Activated CD8-positive, alpha-beta memory T cell treated with anti-CD3 and anti-CD28 coated beads, Interleukin-2, amount 10 ng/mL, durations not matched to agents 7 days and 5 days (primary cell): ENCODE measurements at regions of chr7 and their contacts with region 1.

Region 1: DNA sequence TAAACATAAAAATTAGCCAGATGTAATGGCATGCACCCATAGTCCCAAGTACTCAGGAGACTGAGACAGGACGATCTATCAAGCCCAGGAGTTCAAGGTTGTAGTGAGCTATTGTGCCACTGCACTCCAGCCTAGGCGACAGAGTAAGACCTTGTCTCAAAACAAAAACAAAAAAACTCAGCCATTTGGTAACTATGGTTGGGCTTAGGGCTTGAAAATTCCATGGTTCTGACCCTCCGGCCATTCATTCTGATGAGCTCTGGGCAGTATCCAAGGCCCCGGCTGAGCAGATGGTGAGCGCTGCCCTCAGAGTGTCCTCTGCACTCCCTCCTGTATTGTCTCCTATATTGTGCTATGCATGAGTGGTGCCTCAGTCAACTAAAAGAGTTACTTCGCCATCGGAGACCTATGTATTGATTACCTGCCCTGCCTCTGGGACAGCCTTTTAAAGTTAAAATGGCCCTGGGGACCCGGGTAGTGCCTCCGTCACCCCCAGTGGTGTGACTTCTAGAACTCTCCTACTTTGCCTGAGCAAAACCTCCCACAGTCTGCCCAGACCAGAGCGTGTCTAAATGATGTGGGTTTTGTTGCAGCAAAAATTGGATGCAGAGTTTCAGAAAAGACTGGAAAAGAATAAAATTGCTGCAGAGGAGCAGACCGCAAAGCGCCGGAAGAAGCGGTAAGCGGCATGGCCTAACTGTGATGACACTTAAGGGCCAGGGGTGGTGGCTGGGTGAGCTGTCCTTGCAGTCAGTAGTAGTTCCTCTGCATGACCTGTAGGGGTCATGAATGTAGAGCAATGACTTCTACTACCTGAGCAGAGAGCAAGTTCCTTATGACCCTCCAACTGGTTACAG is 8.1 kb downstream of the PRKRIP1 start:
- DNase-seq: peak; percentile 70
- ATAC-seq: peak; percentile 99
- H3K4me3 Mint-ChIP-seq: no peak overlapping the region
- H3K27ac Mint-ChIP-seq: peak overlapping the region; percentile 35
- H3K4me1 Mint-ChIP-seq: peaks cover 26% of the 10 kb centered on the region
- H3K27me3 Mint-ChIP-seq: no peaks in the 10 kb centered on the region

Region 2: GRCh38 chr7:102012996-102013461 is 391.2 kb before region 1 on chr7:
- CTCF ChIA-PET with region 1: no interaction called
- DNase-seq: no peak
- ATAC-seq: no peak
- H3K4me3 Mint-ChIP-seq: no peak overlapping the region
- H3K27ac Mint-ChIP-seq: no peak overlapping the region
- H3K4me1 Mint-ChIP-seq: no peaks in the 10 kb centered on the region
- H3K27me3 Mint-ChIP-seq: no peaks in the 10 kb centered on the region

Region 3: DNA sequence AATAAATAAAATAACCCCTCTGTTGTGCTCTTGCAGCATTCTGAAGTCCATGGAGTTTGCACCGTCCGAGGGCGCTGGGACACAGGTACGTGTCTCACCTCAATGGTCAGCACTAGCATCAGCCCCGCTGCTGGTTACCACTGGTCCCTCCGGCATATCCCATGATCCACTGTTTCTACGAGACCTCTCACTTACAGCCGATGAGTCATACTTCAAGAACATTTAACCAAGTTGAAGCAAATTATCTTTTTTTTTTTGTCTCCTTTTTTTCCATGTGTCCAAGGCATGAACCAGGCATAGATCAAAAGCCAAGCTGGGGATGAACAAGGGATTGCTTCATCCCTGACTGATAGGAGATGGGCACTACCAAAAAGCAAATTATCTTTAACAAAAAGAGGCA is 210.4 kb before region 1 on chr7:
- CTCF ChIA-PET with region 1: no interaction called
- DNase-seq: no peak
- ATAC-seq: no peak
- H3K4me3 Mint-ChIP-seq: no peak overlapping the region
- H3K27ac Mint-ChIP-seq: no peak overlapping the region
- H3K4me1 Mint-ChIP-seq: no peaks in the 10 kb centered on the region
- H3K27me3 Mint-ChIP-seq: no peaks in the 10 kb centered on the region

Region 4: GRCh38 chr7:102433219-102434038 is 29.2 kb after region 1 on chr7 and contains the start of gene ORAI2:
- CTCF ChIA-PET with region 1: interaction called, 31 read pairs
- DNase-seq: peak; percentile 89
- ATAC-seq: peak; percentile 71
- H3K4me3 Mint-ChIP-seq: peak within 1 kb of the TSS; percentile 75
- H3K27ac Mint-ChIP-seq: peak within 1 kb of the TSS; percentile 85
- H3K4me1 Mint-ChIP-seq: peaks cover 53% of the 10 kb centered on the region
- H3K27me3 Mint-ChIP-seq: no peaks in the 10 kb centered on the region
- total RNA-seq, gene ORAI2: 58.1 to 73.7 TPM

Region 5: DNA sequence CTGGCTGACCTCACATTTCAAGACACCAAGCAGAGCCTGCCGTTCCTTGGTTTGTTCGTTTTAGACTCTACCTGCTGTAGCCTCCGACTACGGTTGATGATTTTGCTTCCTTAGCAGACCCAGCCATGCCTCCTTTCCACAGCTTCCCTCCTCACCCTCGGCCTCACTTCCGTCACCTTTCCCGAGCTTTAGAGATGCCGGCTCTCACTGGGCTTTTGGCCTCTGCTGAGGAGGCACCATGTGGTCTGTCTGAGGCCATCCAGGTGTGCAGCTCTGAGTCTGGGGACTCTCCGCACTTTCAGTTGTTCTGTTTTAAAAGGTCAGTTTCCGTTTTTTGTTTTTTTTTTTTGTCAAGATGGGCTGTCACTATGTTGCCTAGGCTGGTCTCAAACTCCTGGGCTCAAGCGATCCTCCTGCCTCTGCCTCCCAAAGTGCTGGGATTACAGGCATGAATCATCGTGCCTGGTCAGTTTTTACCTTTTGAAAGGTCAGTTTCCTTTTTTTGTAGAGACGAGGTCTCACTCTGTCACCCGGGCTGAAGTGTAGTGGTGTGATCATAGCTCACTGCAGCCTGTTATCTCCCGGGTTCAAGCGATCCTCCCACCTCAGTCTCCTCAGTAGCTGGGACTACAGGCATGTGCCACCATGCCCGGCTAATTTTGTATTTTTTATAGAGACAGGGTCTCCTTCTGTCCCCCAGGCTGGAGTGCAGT is 40.9 kb after region 1 on chr7:
- CTCF ChIA-PET with region 1: interaction called, 16 read pairs
- DNase-seq: no peak
- ATAC-seq: no peak
- H3K4me3 Mint-ChIP-seq: no peak overlapping the region
- H3K27ac Mint-ChIP-seq: peak overlapping the region; percentile 25
- H3K4me1 Mint-ChIP-seq: peaks cover 10% of the 10 kb centered on the region
- H3K27me3 Mint-ChIP-seq: no peaks in the 10 kb centered on the region

Region 6: DNA sequence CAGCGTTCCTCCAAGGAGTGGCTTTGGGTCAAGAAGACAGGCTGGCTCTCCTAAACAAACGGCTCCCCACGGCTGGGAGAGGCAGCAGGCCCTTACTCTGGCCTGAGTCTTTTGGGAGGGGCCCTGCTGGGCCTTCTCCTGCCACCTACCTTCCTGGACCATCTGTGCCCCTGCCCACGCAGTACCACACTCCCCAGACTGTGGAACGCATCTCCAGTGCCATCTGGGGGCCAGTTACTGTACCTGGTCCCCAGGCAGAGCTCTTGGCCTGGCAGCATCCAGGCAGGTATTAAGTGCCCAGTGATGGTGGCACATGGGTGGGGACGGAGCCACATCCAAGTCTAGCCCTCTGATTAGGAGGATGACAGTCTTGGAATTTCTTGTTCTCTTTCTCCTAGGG is 46.0 kb after region 1 on chr7:
- CTCF ChIA-PET with region 1: interaction called, 16 read pairs
- DNase-seq: no peak
- ATAC-seq: peak; percentile 74
- H3K4me3 Mint-ChIP-seq: no peak overlapping the region
- H3K27ac Mint-ChIP-seq: no peak overlapping the region
- H3K4me1 Mint-ChIP-seq: no peaks in the 10 kb centered on the region
- H3K27me3 Mint-ChIP-seq: no peaks in the 10 kb centered on the region

Region 7: DNA sequence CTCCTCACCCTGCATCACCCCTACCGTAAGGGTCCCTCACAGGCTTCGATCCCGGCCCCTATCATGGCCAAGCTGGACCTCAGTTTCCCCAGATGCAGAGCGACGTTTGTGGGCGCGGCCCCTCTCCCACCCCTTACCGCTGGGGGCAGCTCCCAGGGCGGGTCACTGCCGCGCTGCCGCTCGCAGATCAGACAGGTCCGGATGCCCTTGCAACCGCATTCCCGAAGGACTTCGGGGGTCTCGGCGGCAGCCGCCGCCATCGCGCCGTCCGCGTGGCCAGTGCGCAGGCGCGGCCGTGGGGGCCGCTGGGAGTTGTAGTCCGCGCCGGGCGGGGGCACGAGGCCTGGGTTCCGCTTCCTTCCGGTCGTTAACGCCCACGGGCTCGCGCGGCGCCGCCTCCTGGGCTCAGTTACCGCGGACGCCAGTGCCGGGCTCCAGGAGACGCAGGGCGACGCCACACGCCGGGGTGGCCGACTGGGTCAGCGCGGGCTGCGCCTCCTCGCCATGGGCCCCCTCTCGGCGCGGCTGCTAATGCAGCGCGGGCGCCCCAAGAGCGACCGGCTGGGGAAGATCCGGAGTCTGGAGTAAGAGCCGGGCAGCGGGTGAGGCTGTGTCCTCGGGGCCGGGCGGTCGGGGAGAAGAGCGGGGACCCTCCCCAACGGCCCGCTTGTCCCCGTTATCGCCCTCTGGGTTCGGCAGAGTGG is 60.5 kb after region 1 on chr7 and contains the starts of genes ALKBH4 and LRWD1:
- CTCF ChIA-PET with region 1: interaction called, 19 read pairs
- DNase-seq: peak; percentile 94
- ATAC-seq: peak; percentile 96
- H3K4me3 Mint-ChIP-seq: peak within 1 kb of the TSS; percentile 88
- H3K27ac Mint-ChIP-seq: peak within 1 kb of the TSS; percentile 85
- H3K4me1 Mint-ChIP-seq: peaks cover 23% of the 10 kb centered on the region
- H3K27me3 Mint-ChIP-seq: no peaks in the 10 kb centered on the region
- total RNA-seq, gene ALKBH4: 11.2 to 14.6 TPM
- total RNA-seq, gene LRWD1: 20.6 to 24.0 TPM